ENCODE measurements at regions of chr5 and their contacts with region 1.

Region 1: DNA sequence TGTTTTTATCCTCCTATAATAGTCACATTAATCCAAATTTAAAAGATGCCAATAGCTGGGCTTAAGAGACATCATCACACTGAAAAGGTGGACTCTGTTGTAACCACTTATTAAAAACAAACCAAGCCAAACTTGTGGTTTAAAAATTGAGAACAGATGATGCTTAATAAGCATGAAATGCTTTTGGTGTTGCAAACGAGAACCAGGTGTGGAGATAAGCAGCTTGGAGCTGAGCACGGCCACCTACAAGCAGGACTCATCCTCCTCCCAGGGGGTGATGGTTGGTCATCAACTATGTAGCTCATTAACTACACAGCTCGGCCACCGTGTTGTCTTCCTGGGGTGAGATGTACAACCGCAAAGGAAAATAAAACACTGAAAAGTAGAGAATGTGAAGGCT is 154.4 kb downstream of the NPR3 start:
- DNase-seq: no peak

Region 2: DNA sequence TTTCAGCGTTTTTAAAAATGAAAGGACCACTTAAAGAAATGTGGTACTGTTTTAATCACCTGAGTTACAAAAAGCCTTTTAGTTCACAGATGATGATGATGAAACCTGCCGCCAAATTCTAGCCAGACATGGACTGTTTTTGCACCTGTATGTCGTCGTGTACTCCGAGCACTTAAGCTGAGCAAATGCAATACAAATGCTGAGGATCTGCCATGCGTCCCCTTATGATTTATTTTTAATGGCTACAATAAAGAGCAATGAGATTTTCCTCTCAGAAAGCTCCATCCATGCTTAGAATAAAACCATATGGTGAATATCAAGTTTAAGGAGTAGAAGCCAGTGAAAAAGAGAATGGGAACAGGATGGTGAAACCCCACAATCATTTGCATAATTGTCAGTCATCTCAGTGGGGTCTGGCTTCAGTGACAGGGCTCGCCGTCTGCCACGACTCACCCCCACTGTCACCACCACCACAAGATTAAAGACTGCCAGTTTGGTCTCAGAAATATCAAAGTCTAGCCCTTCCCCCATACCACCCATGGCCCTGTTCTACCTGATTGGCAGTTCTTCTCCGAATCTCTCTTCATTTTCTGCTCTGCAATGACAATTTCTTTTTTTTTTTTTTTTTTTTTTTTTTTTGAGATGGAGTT is 851.3 kb before region 1 on chr5:
- intact Hi-C with region 1: loop called in 1 of 2 experiments (anchors 5 kb)
- DNase-seq: no peak